Caco-2 (cell line): ENCODE measurements at regions of chr14 and their contacts with region 1.

Region 1: GRCh38 chr14:48622980-48623379 is 947.6 kb upstream of the MDGA2 start:
- DNase-seq: no peak
- H3K4me3 ChIP-seq: no peak overlapping the region
- H3K4me3 Mint-ChIP-seq: no peak overlapping the region
- H3K27ac Mint-ChIP-seq: no peak overlapping the region
- H3K4me1 ChIP-seq: no peaks in the 10 kb centered on the region
- H3K4me1 Mint-ChIP-seq: no peaks in the 10 kb centered on the region
- H3K27me3 ChIP-seq: no peaks in the 10 kb centered on the region
- H3K27me3 Mint-ChIP-seq: no peaks in the 10 kb centered on the region
- CTCF ChIP-seq: no peak

Region 2: DNA sequence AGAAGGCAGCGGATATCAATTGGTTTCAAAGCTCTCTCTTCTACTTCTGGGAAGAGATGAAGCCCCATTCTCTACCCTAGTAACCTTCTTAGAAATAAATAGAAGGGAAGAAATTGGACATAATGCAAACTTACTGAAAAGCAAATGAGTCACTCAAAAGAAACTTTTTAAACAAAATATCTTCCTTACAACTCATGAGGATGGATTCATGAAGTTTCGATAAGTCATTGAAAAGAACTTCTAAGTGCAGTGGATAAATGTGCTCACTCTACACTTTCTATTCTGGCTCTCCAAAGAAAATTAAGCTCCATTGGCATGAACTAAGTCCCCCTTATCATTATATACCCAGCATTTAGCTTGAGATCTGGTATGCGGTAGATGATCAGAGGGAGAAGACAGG is 63.7 kb after region 1 on chr14:
- CTCF ChIA-PET with region 1: no interaction called
- POLR2A ChIA-PET with region 1: no interaction called
- intact Hi-C with region 1: loop called (anchors 2 kb)
- DNase-seq: no peak
- H3K4me3 ChIP-seq: no peak overlapping the region
- H3K4me3 Mint-ChIP-seq: no peak overlapping the region
- H3K27ac Mint-ChIP-seq: no peak overlapping the region
- H3K4me1 ChIP-seq: no peaks in the 10 kb centered on the region
- H3K4me1 Mint-ChIP-seq: no peaks in the 10 kb centered on the region
- H3K27me3 ChIP-seq: no peaks in the 10 kb centered on the region
- H3K27me3 Mint-ChIP-seq: no peaks in the 10 kb centered on the region
- CTCF ChIP-seq: no peak

Region 3: DNA sequence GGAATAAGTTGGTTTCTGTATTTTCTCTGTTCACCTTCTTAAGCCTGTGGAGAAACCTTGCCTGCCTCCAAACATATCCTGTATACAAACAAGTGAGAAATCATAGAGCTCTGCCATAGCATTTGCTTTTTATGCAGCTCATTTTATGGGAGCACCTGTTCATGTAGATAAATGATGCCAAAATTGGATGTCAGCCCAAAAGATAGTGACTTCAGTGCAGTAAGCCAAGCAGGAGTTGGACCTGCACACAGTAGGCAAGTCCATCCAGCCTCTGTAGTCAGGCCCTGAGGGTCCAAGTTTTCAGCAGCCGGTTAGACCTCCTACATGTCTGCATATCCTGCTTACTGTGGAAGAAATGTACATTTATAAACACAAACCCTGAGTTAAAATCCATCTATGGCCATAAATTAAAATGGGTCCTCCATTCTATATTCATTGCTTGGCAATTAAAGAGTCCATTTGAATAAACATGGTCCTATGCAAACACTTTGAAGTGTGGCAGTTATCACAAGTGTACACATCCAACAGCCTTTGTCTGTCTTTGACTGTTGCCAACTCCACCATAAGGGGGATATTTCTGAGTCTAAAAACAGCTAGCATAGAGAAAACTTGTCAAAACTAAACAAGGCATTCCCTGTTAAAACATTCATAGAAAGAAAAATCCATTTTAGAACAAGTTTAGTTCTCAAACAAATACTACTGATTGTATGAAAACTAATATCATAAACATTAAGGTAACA is 115.4 kb after region 1 on chr14:
- CTCF ChIA-PET with region 1: no interaction called
- POLR2A ChIA-PET with region 1: no interaction called
- intact Hi-C with region 1: no loop called
- DNase-seq: no peak
- H3K4me3 ChIP-seq: no peak overlapping the region
- H3K4me3 Mint-ChIP-seq: no peak overlapping the region
- H3K27ac Mint-ChIP-seq: no peak overlapping the region
- H3K4me1 ChIP-seq: no peaks in the 10 kb centered on the region
- H3K4me1 Mint-ChIP-seq: no peaks in the 10 kb centered on the region
- H3K27me3 ChIP-seq: no peaks in the 10 kb centered on the region
- H3K27me3 Mint-ChIP-seq: no peaks in the 10 kb centered on the region
- CTCF ChIP-seq: no peak